Adrenal gland (tissue), 19 donors: ENCODE measurements at regions of chr18 and their contacts with region 1.

Region 1: DNA sequence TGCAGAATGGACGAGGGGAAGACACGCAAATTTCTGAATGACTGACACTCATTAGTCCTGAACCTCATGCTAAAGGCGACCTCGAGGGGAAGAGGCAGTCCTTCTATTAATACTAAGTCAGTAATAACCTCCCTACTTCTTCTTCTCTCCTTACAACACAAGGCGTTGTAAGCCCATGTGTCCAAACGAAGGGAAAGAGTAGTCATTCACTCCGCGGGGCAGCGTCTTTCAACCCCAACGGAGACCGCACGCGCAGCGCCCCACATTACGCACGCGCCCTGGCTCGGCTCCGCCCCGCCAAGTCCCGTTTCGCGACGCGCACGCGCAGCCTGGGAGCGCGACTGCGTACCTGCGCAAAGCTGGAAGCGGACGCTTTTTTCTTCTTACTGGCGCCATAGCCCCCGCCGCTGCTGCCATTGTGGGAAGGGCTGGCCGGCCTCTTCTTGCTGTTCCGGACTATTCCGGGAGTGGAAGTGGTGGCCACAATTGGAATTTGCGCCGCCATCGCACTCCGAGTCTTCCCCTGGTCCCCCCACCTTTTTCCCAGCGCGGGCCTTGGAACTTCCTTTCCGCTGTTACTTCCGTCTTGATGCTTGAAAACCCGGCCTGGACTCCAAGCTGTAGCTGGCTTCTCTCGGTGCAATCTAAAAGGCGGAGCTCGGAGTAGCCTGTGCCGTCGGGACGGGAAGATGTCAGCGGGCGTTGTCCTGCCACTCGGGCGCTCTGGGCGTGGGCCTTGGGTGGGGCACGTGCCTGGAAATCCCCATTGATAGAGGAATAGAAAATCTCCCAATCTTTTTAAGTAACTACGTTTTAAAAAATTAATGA is at the start of gene INO80C:
- DNase-seq: peak; percentile 91 to 95 (median 92)
- H3K4me3 ChIP-seq: peak within 1 kb of the TSS; percentile 7 to 98 (median 70)
- H3K27ac ChIP-seq: peak within 1 kb of the TSS; percentile 32 to 97 (median 96)
- H3K4me1 ChIP-seq: peaks cover 10 to 21% of the 10 kb centered on the region in 2 donors
- H3K27me3 ChIP-seq: no peaks in the 10 kb centered on the region
- CTCF ChIP-seq: peak in 1 of 6 experiments; percentile 56
- POLR2A ChIP-seq: peak; percentile 92 to 93
- total RNA-seq, gene INO80C: 3.6 to 29.6 (median 9.0) TPM

Region 2: DNA sequence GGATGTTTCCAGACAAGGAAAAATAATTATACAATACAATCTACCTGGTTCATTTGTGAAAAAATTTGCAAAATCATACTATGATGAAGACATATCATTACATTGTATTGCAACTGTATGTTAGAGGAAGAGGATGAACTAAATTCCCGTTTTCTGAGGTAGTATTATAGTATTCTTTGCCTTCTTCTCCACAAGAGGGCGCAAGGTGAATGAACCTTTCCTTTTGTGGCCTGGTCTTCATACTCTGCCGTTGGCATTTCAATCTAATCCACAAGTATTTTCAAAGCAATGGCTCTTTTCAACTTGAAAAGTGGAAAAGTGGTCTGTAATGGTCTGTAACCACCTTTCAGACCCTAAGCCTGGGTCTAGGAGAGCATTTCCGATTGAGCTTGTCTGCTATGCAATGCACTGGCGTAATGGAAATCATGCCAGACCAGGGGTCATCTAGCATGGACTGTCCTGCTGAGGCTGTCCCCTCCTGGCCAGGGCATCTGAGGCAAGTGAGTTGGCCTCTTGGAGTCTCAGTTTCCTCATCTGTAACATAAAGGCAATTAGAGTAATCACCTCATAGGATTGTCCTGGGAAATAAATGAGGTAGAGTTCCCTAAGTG is 89.6 kb before region 1 on chr18:
- intact Hi-C with region 1: loop called in 1 of 2 experiments (anchors 5 kb)
- DNase-seq: peak; percentile 30 to 74 (median 57)
- H3K4me3 ChIP-seq: no peak overlapping the region
- H3K27ac ChIP-seq: no peak overlapping the region
- H3K4me1 ChIP-seq: no peaks in the 10 kb centered on the region
- H3K27me3 ChIP-seq: no peaks in the 10 kb centered on the region
- CTCF ChIP-seq: peak; percentile 61 to 88 (median 76)
- POLR2A ChIP-seq: no peak

Region 3: DNA sequence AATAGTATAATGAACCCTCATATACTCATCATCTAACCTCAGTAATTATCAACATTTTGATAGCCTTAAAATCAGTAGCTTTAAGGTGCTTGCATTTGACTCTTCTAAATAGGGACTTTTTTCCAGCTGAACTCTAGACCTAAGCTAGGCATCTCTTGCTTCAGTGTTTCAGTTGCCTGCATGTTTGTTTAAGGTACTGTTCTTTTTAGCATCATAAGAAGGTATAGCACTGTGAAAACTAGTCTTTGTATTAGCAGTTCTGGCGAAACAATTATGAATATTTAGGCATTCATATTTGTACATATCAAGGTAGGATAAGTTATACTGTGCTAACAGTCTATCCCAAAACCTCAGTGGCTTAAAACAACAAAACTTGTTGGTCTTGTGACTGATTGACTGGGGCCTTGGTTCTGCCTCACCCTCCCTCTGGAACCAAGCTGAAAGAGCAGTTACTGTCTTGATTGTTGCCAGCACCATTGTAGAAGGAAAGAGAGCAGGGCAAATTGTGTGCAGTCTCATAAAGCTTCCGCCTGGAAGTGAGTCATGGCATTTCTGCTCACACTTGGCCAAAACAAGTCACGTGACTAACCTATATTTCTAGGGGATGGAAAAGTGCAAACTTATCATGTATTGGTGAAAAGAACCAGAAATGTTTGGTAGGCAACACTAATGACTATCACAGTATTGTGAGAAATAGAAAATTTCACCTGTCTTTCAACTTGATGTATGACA is 108.3 kb after region 1 on chr18:
- intact Hi-C with region 1: no loop called
- DNase-seq: no peak
- H3K4me3 ChIP-seq: no peak overlapping the region
- H3K27ac ChIP-seq: no peak overlapping the region
- H3K4me1 ChIP-seq: peaks cover 0 to 3% of the 10 kb centered on the region in 2 donors
- H3K27me3 ChIP-seq: no peaks in the 10 kb centered on the region
- CTCF ChIP-seq: no peak
- POLR2A ChIP-seq: no peak